Posterior cingulate gyrus (tissue), 11 donors: ENCODE measurements at regions of chr11 and their contacts with region 1.

Region 1: GRCh38 chr11:3217676-3218482 is 734 bp downstream of the MRGPRG start:
- DNase-seq: peak in 6 of 10 donors; percentile 3 to 83 (median 31)

Region 2: GRCh38 chr11:3037040-3037944 is 180.6 kb before region 1 on chr11:
- intact Hi-C with region 1: loop called (anchors 2 kb)
- DNase-seq: peak; percentile 70 to 97 (median 90)

Region 3: DNA sequence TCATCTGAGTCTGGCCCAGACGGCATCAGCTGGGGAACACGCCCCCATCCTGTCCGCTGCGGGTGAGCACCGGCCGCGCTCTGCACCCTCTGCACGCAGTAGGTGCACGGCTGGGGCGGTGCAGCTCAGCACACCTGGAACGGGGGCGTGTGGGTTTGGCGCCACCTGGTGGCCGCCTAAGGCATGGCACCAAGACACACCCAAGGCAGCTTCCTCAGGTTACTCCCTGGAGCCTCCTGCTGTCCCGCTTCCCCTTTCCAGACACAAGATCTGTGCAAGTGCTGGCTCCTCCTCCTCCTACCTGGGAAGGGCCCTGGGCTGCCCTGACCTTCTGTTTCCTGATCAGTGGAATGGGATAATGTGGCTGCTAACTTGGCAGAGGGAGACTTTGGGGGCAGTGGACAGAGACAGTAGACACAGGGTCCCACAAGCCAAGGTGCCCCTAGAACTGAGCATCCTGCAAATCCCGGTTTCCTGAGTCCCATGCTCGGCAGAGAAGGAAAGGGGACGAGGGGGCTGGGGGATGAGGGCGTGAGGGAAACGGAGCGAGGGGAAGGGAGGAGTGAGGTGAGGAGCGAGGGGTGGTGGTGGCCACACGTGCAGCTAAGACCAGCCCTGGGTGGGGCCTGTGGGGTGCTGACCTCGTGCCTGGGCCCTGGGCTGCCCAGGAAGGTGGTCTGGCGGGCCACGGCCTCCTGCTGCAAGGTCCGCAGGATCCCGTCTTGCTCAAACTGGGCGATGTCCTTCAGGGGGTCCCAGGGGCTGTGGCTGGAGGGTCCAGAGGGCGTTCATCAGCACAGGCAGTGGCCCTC is 125.9 kb before region 1 on chr11:
- intact Hi-C with region 1: loop called (anchors 10 kb)
- DNase-seq: peak in 8 of 10 donors; percentile 45 to 96 (median 72)

Region 4: GRCh38 chr11:3123761-3124733 is 93.8 kb before region 1 on chr11:
- intact Hi-C with region 1: loop called (anchors 5 kb)
- DNase-seq: peak in 9 of 10 donors; percentile 5 to 88 (median 31)

Region 5: DNA sequence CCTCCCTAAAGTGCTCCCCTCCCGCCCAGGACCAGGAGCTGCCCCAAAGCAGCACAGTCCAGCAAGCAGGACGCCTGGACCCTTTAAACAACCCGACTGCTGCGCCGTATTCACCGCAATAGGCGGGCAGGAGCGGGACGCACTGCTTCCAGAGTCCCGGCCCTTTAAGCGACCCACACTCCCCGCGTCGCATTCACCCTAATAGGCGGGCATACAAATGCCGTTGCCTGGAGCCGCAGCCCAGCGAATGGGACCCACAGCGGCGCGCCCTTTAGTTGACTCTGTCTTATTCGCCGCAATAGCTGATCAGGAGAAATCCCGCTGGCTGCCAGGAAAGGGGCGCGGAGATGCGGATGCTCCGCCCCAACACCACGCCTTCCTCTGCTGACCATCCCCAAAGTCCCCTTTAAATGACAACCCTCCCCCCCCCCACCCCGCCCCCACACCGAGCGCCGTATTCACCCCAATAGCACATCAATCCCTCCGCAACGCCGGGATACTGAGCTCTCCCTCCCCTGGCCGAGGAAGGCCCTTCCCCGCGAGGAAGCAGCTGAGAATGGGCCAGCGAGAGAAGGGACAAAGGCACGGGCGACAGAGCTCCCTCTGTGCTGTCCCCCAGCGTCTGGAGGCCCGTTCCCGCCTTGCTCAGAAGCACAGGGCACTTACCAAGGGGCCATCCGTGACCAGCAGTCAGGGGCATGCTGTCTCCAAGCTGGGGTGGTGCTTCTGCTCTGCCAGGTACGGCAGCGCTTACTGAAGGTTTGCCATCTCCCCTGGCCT is 57.4 kb before region 1 on chr11:
- intact Hi-C with region 1: loop called (anchors 5 kb)
- DNase-seq: peak; percentile 84 to 99 (median 92)